Motor neuron (in vitro differentiated cells): ENCODE measurements at regions of chr12 and their contacts with region 1.

Region 1: GRCh38 chr12:16359512-16360491 is 12.4 kb downstream of the MGST1 start:
- ATAC-seq: peak in 3 of 8 experiments; percentile 57 to 69 (median 62)
- H3K4me3 ChIP-seq: no peak overlapping the region
- H3K27ac ChIP-seq: no peak overlapping the region
- H3K4me1 ChIP-seq: no peaks in the 10 kb centered on the region

Region 2: DNA sequence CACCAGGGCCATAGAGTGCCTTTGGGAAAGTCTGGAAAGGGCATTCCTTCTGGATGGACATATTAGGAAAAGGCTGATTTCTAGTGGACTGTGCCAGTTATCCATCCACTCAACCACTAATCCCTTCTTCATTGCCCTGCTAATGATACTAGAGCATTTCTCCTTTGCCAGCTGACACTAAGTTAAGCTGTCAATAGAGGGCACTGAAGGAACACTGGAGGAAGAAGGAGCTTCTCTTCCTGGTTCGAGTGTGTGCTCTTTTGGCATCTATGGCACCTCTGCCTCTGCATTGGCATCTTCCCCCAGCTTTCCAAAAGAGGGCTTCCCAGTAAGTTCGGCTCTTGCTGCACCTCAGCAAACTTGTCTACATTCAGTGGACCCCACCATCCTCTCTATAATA is 283.2 kb before region 1 on chr12:
- in situ Hi-C with region 1: loop called in 1 of 9 experiments (anchors 25 kb)
- ATAC-seq: peak in 4 of 8 experiments; percentile 36 to 89 (median 86)
- H3K4me3 ChIP-seq: no peak overlapping the region
- H3K27ac ChIP-seq: no peak overlapping the region
- H3K4me1 ChIP-seq: no peaks in the 10 kb centered on the region

Region 3: DNA sequence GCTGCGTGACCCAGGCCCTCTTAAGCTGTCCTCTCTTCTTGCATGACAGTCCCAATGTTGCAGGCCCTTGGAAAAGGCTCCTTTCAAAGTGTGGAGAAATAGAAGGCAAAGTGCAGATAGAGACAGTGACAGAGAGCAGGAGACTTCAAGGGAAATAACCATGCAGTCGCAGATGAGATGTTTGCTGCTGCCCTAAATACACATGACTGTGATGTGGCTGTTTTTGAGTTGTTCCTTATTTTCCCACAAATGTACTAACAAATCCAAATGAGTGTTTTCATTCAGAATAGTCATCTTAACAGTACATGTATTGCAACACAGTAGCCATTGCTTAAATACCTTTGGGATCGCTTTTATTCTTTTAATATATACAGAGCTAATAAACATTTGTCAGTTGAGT is 184.0 kb before region 1 on chr12:
- in situ Hi-C with region 1: loop called in 2 of 9 experiments (anchors 10 to 25 kb)
- ATAC-seq: no peak
- H3K4me3 ChIP-seq: no peak overlapping the region
- H3K27ac ChIP-seq: no peak overlapping the region
- H3K4me1 ChIP-seq: no peaks in the 10 kb centered on the region

Region 4: DNA sequence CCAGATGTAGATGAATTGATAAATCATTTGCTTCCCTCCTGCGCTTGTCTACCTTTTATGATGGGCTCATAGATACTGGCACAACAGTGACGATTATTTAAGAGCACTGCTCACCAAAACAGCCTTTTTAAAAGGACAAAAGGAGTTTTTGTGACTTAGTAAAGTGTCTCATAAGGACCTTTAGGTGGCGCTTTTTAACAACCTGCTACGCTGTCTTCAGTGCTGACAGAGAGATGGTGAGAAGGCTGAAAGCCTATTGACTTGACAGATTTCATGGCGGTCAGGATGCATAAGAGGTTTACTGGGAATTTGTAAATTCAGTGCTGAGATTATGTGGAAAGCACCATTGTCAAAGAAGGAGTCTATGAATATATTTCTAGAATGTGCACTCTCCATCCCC is 170.0 kb before region 1 on chr12:
- in situ Hi-C with region 1: loop called in 1 of 9 experiments (anchors 25 kb)
- ATAC-seq: peak in 4 of 8 experiments; percentile 31 to 82 (median 74)
- H3K4me3 ChIP-seq: no peak overlapping the region
- H3K27ac ChIP-seq: no peak overlapping the region
- H3K4me1 ChIP-seq: no peaks in the 10 kb centered on the region